ENCODE measurements at regions of chr6 and their contacts with region 1.

Region 1: DNA sequence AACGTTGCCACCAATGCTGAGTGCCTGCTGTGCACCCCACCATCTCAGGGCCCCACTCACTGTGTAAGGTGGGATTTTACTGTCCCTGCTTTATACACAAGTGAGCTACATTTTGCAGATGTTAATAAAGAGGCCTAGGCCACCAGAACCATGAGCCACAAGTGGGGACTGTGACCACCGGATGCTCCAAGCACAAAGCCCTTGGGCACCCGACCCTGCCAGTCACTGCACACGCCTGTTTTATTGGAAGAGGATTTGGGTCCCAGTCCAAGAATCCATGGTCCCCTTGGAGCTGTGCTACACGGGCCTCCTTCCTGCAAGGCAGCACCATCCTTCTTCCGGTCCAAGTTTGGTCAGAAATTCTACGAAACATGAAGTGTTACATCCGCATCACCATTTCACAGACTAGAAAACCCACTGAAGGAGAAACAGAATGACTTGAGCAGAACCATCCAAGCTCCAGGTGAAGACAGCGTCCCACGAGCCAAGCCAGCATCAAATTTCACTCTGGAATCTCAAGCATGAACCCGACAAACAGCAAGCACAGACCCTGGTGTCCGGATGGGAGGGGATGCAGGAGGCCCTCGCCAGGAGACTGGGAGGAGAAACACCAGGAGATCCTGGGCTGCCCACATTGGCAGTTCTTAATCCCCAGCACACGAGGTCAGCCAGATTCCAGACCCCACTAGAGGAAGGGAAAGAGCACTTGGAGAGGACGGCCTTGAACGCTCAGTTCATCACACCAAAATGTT is 226.9 kb downstream of the DLL1 start:
- DNase-seq: no peak
- H3K4me3 Mint-ChIP-seq: no peak overlapping the region
- H3K27ac Mint-ChIP-seq: no peak overlapping the region
- H3K4me1 Mint-ChIP-seq: no peaks in the 10 kb centered on the region
- H3K27me3 Mint-ChIP-seq: peaks cover 40% of the 10 kb centered on the region
- CTCF ChIP-seq: no peak

Region 2: GRCh38 chr6:170149681-170150589 is 85.9 kb after region 1 on chr6:
- CTCF ChIA-PET with region 1: interaction called, 11 read pairs
- intact Hi-C with region 1: no loop called
- DNase-seq: no peak
- H3K4me3 Mint-ChIP-seq: no peak overlapping the region
- H3K27ac Mint-ChIP-seq: no peak overlapping the region
- H3K4me1 Mint-ChIP-seq: no peaks in the 10 kb centered on the region
- H3K27me3 Mint-ChIP-seq: peaks cover 46% of the 10 kb centered on the region
- CTCF ChIP-seq: no peak

Measured in Calu3 (cell line).